Heart right ventricle (tissue), 16 donors: ENCODE measurements at regions of chr2 and their contacts with region 1.

Region 1: DNA sequence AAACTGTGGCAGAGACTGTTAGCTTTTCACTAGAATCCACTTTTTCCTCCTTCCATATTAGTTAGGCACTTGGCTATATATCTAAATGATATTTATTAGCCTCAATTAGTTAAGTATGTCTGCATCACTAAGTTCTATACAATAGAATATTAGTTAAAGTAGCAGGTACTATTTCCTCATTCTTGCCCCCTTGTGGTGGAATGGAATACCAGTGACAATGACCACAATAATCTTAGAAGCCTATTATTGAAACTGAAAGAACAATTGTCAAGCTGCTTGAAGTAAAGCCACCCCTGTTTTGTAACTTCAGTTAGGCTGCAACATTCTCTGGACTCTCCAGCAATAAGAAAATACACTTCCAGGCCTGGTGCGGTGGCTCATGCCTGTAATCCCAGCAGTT is 476.3 kb upstream of the VWC2L start:
- DNase-seq: no peak
- ATAC-seq: no peak
- H3K4me3 ChIP-seq: no peak overlapping the region
- H3K27ac ChIP-seq: no peak overlapping the region
- H3K4me1 ChIP-seq: no peaks in the 10 kb centered on the region
- H3K27me3 ChIP-seq: no peaks in the 10 kb centered on the region
- CTCF ChIP-seq: peak in 6 of 9 donors; percentile 23 to 53 (median 40)

Region 2: GRCh38 chr2:213251618-213252017 is 682.9 kb before region 1 on chr2:
- intact Hi-C with region 1: loop called in 2 of 10 experiments (anchors 5 to 10 kb)
- DNase-seq: no peak
- ATAC-seq: peak in 3 of 8 donors; percentile 34 to 74 (median 43)
- H3K4me3 ChIP-seq: no peak overlapping the region
- H3K27ac ChIP-seq: no peak overlapping the region
- H3K4me1 ChIP-seq: no peaks in the 10 kb centered on the region
- H3K27me3 ChIP-seq: peaks cover 0 to 4% (median 0%) of the 10 kb centered on the region in 7 donors
- CTCF ChIP-seq: peak; percentile 54 to 85 (median 71)